CD8-positive, alpha-beta T cell (primary cell): ENCODE measurements at regions of chr22 and their contacts with region 1.

Region 1: DNA sequence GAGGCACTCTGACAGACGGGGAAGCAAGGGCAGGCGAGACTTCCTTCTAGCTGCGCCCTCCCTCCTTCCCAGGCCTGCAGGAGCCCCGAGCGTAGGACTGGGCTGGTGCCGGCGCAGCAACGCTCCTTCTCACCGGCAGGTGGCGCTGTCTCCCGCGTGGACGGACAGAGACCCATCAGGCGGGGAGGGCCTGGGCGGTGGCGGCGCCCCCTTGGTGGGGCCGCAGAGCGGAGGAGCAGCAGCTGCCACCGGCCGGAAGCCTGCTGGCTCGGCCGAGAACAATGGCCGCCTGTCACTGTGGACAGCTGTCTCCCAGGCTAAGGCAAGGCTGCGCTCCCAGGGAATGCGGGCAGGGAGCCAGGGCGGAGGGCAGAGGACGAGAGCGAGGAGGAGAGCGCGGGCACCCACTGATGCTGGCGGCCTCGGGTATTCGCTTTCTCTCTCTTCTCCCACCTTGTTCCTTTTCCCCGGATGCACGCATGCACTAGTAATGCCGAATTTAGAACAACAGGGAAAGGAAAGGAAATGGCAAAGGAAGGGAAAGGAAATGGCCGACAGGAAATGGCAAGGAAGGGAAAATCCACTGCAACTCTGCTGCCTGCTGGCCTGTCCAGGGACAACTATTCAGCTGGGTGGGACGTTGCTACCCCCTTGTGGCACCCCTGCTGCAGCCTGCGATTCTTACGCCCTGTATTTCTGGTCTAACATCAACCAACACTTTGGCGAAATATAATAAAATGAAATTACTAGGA is 14.4 kb downstream of the PPM1F start:
- DNase-seq: peak; percentile 81 to 95 (median 91)
- ATAC-seq: peak; percentile 98
- H3K4me3 ChIP-seq: peak overlapping the region; percentile 52 to 76
- H3K4me3 Mint-ChIP-seq: peak overlapping the region; percentile 83
- H3K27ac ChIP-seq: peak overlapping the region; percentile 43 to 86
- H3K27ac Mint-ChIP-seq: peak overlapping the region; percentile 74
- H3K4me1 ChIP-seq: peaks cover 23% of the 10 kb centered on the region
- H3K4me1 Mint-ChIP-seq: peaks cover 36% of the 10 kb centered on the region
- H3K27me3 ChIP-seq: no peaks in the 10 kb centered on the region
- H3K27me3 Mint-ChIP-seq: no peaks in the 10 kb centered on the region
- CTCF ChIP-seq: peak; percentile 96

Region 2: GRCh38 chr22:21712894-21713712 is 225.1 kb before region 1 on chr22:
- CTCF ChIA-PET with region 1: interaction called, 10 read pairs
- POLR2A ChIA-PET with region 1: no interaction called
- intact Hi-C with region 1: loop called (anchors 1 kb)
- DNase-seq: peak in 8 of 9 experiments; percentile 39 to 80 (median 60)
- ATAC-seq: peak; percentile 96
- H3K4me3 ChIP-seq: no peak overlapping the region
- H3K4me3 Mint-ChIP-seq: peak overlapping the region; percentile 37
- H3K27ac ChIP-seq: no peak overlapping the region
- H3K27ac Mint-ChIP-seq: no peak overlapping the region
- H3K4me1 ChIP-seq: no peaks in the 10 kb centered on the region
- H3K4me1 Mint-ChIP-seq: peaks cover 5% of the 10 kb centered on the region
- H3K27me3 ChIP-seq: no peaks in the 10 kb centered on the region
- H3K27me3 Mint-ChIP-seq: no peaks in the 10 kb centered on the region
- CTCF ChIP-seq: peak; percentile 81

Region 3: GRCh38 chr22:21907638-21908522 is 30.4 kb before region 1 on chr22:
- CTCF ChIA-PET with region 1: no interaction called
- POLR2A ChIA-PET with region 1: no interaction called
- intact Hi-C with region 1: no loop called
- DNase-seq: no peak
- ATAC-seq: no peak
- H3K4me3 ChIP-seq: no peak overlapping the region
- H3K4me3 Mint-ChIP-seq: no peak overlapping the region
- H3K27ac ChIP-seq: no peak overlapping the region
- H3K27ac Mint-ChIP-seq: no peak overlapping the region
- H3K4me1 ChIP-seq: no peaks in the 10 kb centered on the region
- H3K4me1 Mint-ChIP-seq: no peaks in the 10 kb centered on the region
- H3K27me3 ChIP-seq: no peaks in the 10 kb centered on the region
- H3K27me3 Mint-ChIP-seq: no peaks in the 10 kb centered on the region
- CTCF ChIP-seq: no peak

Region 4: GRCh38 chr22:21919526-21920307 is 18.5 kb before region 1 on chr22:
- CTCF ChIA-PET with region 1: interaction called, 17 read pairs
- POLR2A ChIA-PET with region 1: interaction called, 4 read pairs
- intact Hi-C with region 1: no loop called
- DNase-seq: no peak
- ATAC-seq: no peak
- H3K4me3 ChIP-seq: no peak overlapping the region
- H3K4me3 Mint-ChIP-seq: no peak overlapping the region
- H3K27ac ChIP-seq: no peak overlapping the region
- H3K27ac Mint-ChIP-seq: no peak overlapping the region
- H3K4me1 ChIP-seq: no peaks in the 10 kb centered on the region
- H3K4me1 Mint-ChIP-seq: no peaks in the 10 kb centered on the region
- H3K27me3 ChIP-seq: no peaks in the 10 kb centered on the region
- H3K27me3 Mint-ChIP-seq: no peaks in the 10 kb centered on the region
- CTCF ChIP-seq: no peak

Region 5: DNA sequence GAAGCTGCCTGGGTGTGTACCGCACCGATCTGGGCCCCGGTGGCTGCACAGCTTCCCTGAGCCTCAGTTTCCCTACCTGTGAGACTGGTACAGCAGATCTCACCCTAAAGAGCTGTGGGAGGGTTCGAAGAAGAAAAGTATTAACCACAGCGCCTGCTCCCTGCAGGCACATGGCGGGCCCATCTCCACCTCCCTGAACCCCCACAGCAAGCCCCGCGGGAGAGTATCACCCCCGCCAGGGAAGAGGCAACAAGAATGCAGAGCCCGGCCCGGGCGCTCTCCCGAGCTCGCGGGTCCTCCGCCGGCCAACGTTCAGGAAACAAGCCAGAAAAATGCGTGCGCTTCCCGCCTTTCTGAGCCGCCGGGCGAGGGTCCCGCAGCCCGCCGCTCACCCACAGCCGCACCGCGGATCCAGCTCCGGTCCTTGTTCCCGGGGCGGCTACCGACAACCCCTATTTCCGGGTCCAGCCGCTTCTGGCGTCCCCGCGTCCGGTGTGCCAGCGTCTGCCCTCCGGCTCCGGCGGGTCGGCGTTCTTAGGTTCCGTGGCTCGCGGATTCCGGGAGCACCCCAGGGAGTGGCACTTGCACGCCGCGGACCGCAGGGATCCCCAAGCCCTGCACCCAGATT is 44.2 kb after region 1 on chr22 and contains the start of gene TOP3B:
- CTCF ChIA-PET with region 1: interaction called, 4 read pairs
- POLR2A ChIA-PET with region 1: no interaction called
- intact Hi-C with region 1: loop called in 1 of 2 experiments (anchors 2 kb)
- DNase-seq: peak; percentile 65 to 90 (median 81)
- ATAC-seq: peak; percentile 95
- H3K4me3 ChIP-seq: peak within 1 kb of the TSS; percentile 93
- H3K4me3 Mint-ChIP-seq: peak within 1 kb of the TSS; percentile 87
- H3K27ac ChIP-seq: peak within 1 kb of the TSS; percentile 75 to 78
- H3K27ac Mint-ChIP-seq: peak within 1 kb of the TSS; percentile 89
- H3K4me1 ChIP-seq: peaks cover 15% of the 10 kb centered on the region
- H3K4me1 Mint-ChIP-seq: peaks cover 46% of the 10 kb centered on the region
- H3K27me3 ChIP-seq: no peaks in the 10 kb centered on the region
- H3K27me3 Mint-ChIP-seq: no peaks in the 10 kb centered on the region
- CTCF ChIP-seq: no peak
- total RNA-seq, gene TOP3B: 71.4 to 74.3 TPM